WTC11 (cell line): ENCODE measurements at regions of chr20 and their contacts with region 1.

Region 1: DNA sequence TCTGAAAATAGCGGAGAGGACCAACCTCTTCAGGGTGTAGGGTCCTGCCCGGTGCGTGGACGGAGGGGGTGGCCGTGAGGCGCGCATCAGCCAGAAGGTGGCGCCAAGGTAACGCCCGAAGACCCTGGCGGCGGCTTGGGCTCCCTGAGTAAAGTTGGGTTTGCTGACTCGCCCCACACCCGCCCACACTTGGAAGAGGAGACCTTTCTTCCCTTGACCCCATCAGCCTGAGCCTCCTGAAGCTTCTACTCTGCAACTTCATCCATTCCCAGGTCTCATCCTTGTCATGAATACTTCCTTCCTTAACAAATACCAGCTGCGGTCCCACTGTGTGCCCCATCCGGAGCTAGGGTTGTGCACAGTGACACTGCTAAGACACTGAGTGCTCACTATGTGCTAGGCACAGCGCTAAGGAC is 14.6 kb downstream of the CD40 start:
- DNase-seq: peak; percentile 86
- ATAC-seq: peak; percentile 83
- H3K4me3 Mint-ChIP-seq: no peak overlapping the region
- H3K27ac Mint-ChIP-seq: no peak overlapping the region
- H3K4me1 Mint-ChIP-seq: peaks cover 17% of the 10 kb centered on the region
- H3K27me3 Mint-ChIP-seq: peaks cover 17% of the 10 kb centered on the region
- CTCF ChIP-seq: peak; percentile 78

Region 2: DNA sequence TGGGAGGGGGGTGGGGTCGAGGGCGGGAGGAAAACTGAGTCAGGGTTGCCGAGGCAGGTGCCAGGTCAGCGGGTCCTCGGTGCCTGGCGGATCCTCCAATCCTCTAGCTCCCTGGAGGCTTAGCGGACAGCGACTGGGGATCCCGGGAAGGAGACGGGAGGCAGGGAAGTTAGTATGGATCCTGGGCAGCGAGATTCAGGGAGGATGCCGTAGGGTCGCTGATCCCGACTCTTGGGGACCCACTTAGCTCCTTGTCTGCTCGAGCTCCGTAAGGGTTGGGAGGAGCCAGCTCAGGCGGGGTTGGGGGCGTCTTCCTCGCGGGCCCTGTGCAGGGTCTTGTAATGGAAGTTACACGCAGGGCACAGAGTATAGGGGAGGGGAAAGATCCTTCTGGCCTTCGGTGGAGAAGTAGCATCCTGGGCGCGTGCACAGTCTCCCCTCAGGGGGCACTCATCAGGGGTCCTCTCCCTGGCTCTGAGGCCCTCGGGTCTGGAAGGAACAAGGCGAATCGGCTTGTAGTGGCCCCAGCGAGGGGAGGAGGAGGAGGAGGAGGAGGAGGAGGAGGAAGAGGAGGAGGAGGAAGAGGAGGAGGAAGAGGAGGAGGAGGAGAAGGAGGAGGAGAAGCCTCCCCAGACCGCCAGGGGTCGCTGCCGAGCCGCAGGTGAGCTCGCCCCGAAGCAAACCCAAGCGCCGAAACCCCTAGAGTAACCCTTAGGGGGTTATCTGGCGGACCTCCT is 110.1 kb before region 1 on chr20:
- CTCF ChIA-PET with region 1: interaction called, 24 read pairs
- POLR2A ChIA-PET with region 1: no interaction called
- DNase-seq: peak; percentile 87
- ATAC-seq: peak; percentile 7; the same call in 1 of the 2 replicates
- H3K4me3 Mint-ChIP-seq: peak overlapping the region; percentile 76
- H3K27ac Mint-ChIP-seq: peak overlapping the region; percentile 28; the same call in 1 of the 2 replicates
- H3K4me1 Mint-ChIP-seq: peaks cover 7% of the 10 kb centered on the region
- H3K27me3 Mint-ChIP-seq: peaks cover 50% of the 10 kb centered on the region
- CTCF ChIP-seq: peak; percentile 79

Region 3: GRCh38 chr20:46065006-46065405 is 67.7 kb before region 1 on chr20:
- CTCF ChIA-PET with region 1: no interaction called
- POLR2A ChIA-PET with region 1: no interaction called
- DNase-seq: no peak
- ATAC-seq: no peak
- H3K4me3 Mint-ChIP-seq: no peak overlapping the region
- H3K27ac Mint-ChIP-seq: no peak overlapping the region
- H3K4me1 Mint-ChIP-seq: peaks cover 15% of the 10 kb centered on the region
- H3K27me3 Mint-ChIP-seq: peaks cover 1% of the 10 kb centered on the region; the same call in 1 of the 2 replicates
- CTCF ChIP-seq: no peak

Region 4: GRCh38 chr20:46117704-46118467 is 14.8 kb before region 1 on chr20 and contains the start of gene CD40:
- CTCF ChIA-PET with region 1: interaction called, 19 read pairs
- POLR2A ChIA-PET with region 1: no interaction called
- DNase-seq: peak; percentile 95
- ATAC-seq: peak; percentile 95
- H3K4me3 Mint-ChIP-seq: peak within 1 kb of the TSS; percentile 99
- H3K27ac Mint-ChIP-seq: peak within 1 kb of the TSS; percentile 98
- H3K4me1 Mint-ChIP-seq: peaks cover 7% of the 10 kb centered on the region
- H3K27me3 Mint-ChIP-seq: peaks cover 49% of the 10 kb centered on the region
- CTCF ChIP-seq: no peak
- total RNA-seq, gene CD40: 12.9 to 15.3 TPM (median 14.8 TPM) in 3 replicates

Region 5: GRCh38 chr20:46174469-46175128 is 41.9 kb after region 1 on chr20:
- CTCF ChIA-PET with region 1: interaction called, 72 read pairs
- POLR2A ChIA-PET with region 1: no interaction called
- DNase-seq: peak; percentile 93
- ATAC-seq: peak; percentile 97
- H3K4me3 Mint-ChIP-seq: peak overlapping the region; percentile 62
- H3K27ac Mint-ChIP-seq: no peak overlapping the region
- H3K4me1 Mint-ChIP-seq: no peaks in the 10 kb centered on the region
- H3K27me3 Mint-ChIP-seq: peaks cover 54% of the 10 kb centered on the region
- CTCF ChIP-seq: peak; percentile 55

Region 6: DNA sequence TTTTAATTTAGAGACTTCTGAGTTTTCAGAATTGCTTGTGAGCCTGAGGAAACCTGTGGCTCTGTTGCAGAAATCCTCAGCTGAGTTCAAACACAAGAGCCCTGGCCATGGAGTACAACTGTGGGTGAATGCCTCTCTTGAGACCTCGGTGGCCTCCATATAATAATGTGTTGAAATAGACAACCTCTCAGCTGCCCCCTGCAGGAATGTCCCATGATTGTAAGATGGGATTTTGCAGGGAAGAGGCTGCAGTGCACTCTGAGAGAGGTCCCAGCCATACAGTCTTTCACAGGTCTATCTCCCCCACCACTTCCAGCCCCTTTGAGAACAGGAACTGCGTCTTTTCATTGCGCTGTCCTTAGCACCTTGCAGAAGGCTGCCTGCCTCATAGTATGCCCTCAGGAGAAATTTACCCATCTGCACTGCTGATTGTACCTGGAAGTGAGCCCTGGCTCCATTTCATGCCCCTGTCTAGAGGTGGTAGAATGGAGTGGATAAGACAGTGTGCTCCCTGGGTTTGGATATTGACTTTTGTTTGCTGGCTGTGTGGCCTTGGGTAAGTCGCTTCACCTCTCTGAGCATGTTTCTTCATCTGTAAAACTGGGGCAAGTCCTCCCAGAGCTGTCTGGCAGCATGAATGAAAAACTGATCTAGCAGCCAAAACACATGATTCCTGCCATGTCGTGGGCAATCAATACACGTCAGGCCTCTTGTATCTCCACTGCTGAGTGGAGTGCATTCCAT is 192.4 kb after region 1 on chr20:
- CTCF ChIA-PET with region 1: interaction called, 14 read pairs
- POLR2A ChIA-PET with region 1: no interaction called
- DNase-seq: peak; percentile 62
- ATAC-seq: peak; percentile 87
- H3K4me3 Mint-ChIP-seq: no peak overlapping the region
- H3K27ac Mint-ChIP-seq: no peak overlapping the region
- H3K4me1 Mint-ChIP-seq: peaks cover 12% of the 10 kb centered on the region
- H3K27me3 Mint-ChIP-seq: no peaks in the 10 kb centered on the region
- CTCF ChIP-seq: no peak